ENCODE measurements at regions of chr16 and their contacts with region 1.

Region 1: GRCh38 chr16:361872-362701 is 8.3 kb downstream of the MRPL28 start:
- DNase-seq: peak; percentile 89 to 94
- ATAC-seq: peak; percentile 86 to 94
- H3K4me3 ChIP-seq: no peak overlapping the region
- H3K27ac ChIP-seq: 0 out of 6 replicates have a peak overlapping the region, but pooled peaks of 1 of the 2 experiments have one; percentile 49
- H3K4me1 ChIP-seq: peaks cover 7% of the 10 kb centered on the region; the same call in 2 of the 3 replicates
- CTCF ChIP-seq: peak; percentile 88
- EP300 ChIP-seq: no peak
- POLR2A ChIP-seq: no peak
- RAD21 ChIP-seq: peak; percentile 96 to 97

Region 2: GRCh38 chr16:77807-78443 is 284.2 kb before region 1 on chr16 and contains the start of gene MPG:
- CTCF ChIA-PET with region 1: interaction called, 62 read pairs
- POLR2A ChIA-PET with region 1: interaction called, 3 read pairs
- DNase-seq: peak; percentile 77 to 98
- ATAC-seq: peak; percentile 54 to 76
- H3K4me3 ChIP-seq: peak within 1 kb of the TSS; percentile 94
- H3K27ac ChIP-seq: peak within 1 kb of the TSS; percentile 97 to 98
- H3K4me1 ChIP-seq: peaks cover 30% of the 10 kb centered on the region
- CTCF ChIP-seq: no peak
- EP300 ChIP-seq: no peak
- POLR2A ChIP-seq: peak; percentile 73
- RAD21 ChIP-seq: no peak
- polyA plus RNA-seq, gene MPG: 25.5 and 28.2 TPM in 2 replicates

Region 3: GRCh38 chr16:106623-107324 is 255.3 kb before region 1 on chr16:
- CTCF ChIA-PET with region 1: interaction called, 71 read pairs
- POLR2A ChIA-PET with region 1: interaction called, 5 read pairs
- DNase-seq: peak; percentile 71 to 86
- ATAC-seq: peak; percentile 84 to 93
- H3K4me3 ChIP-seq: no peak overlapping the region
- H3K27ac ChIP-seq: peak overlapping the region in 1 of 2 experiments; percentile 48; a peak in 2 of 6 replicates
- H3K4me1 ChIP-seq: peaks cover 5% of the 10 kb centered on the region; the same call in 2 of the 3 replicates
- CTCF ChIP-seq: peak; percentile 85
- EP300 ChIP-seq: no peak
- POLR2A ChIP-seq: no peak
- RAD21 ChIP-seq: peak; percentile 76 to 83

Region 4: DNA sequence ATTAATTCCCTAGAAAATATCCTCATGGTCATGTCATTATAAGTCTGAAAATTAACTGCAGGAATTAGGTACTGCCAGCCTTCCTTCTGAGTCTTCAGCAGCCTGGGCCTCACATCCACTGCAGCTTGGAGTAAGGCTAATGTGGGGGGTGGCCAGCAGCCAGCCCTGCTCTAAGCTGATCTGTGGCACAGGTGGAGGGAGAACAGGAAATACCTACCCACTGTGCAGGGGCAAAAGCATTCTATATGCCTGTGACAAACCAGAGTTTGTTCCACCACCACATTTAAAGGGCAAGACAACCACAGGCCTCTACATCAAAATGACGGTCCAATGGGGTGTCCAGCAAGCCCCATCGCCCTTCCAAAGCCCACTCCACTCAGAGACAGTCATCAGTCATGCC is 233.0 kb before region 1 on chr16:
- CTCF ChIA-PET with region 1: interaction called, 25 read pairs
- POLR2A ChIA-PET with region 1: no interaction called
- DNase-seq: no peak
- ATAC-seq: no peak
- H3K4me3 ChIP-seq: no peak overlapping the region
- H3K27ac ChIP-seq: no peak overlapping the region
- H3K4me1 ChIP-seq: no peaks in the 10 kb centered on the region
- CTCF ChIP-seq: no peak
- EP300 ChIP-seq: no peak
- POLR2A ChIP-seq: no peak
- RAD21 ChIP-seq: no peak

Region 5: GRCh38 chr16:188671-189070 is 173.4 kb before region 1 on chr16:
- CTCF ChIA-PET with region 1: interaction called, 14 read pairs
- POLR2A ChIA-PET with region 1: no interaction called
- DNase-seq: no peak
- ATAC-seq: peak; percentile 59 to 72
- H3K4me3 ChIP-seq: no peak overlapping the region
- H3K27ac ChIP-seq: no peak overlapping the region
- H3K4me1 ChIP-seq: no peaks in the 10 kb centered on the region
- CTCF ChIP-seq: peak; percentile 35
- EP300 ChIP-seq: no peak
- POLR2A ChIP-seq: no peak
- RAD21 ChIP-seq: no peak

Region 6: DNA sequence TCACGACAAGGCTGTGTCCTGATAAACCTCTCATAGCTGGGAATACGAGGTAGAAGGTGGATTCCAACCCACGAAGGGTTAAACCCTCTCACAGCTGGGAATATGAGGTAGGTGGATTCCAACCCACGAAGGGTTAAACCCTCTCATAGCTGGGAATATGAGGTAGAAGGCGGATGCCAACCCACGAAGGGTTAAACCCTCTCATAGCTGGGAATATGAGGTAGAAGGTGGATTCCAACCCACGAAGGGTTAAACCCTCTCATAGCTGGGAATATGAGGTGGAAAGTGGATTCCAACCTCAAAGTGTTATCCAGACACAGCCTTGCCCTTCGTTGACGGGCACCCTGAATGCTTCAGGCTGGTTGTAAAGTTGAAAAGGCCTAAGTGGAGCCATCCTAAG is 40.6 kb before region 1 on chr16:
- CTCF ChIA-PET with region 1: interaction called, 11 read pairs
- POLR2A ChIA-PET with region 1: no interaction called
- DNase-seq: no peak
- ATAC-seq: no peak
- H3K4me3 ChIP-seq: no peak overlapping the region
- H3K27ac ChIP-seq: no peak overlapping the region
- H3K4me1 ChIP-seq: peaks cover 8% of the 10 kb centered on the region
- CTCF ChIP-seq: no peak
- EP300 ChIP-seq: no peak
- POLR2A ChIP-seq: no peak
- RAD21 ChIP-seq: no peak